ENCODE measurements at regions of chr17 and their contacts with region 1.

Region 1: GRCh38 chr17:29931231-29931932 is 1.4 kb upstream of the SSH2 start:
- DNase-seq: peak; percentile 58 to 85 (median 67)
- H3K4me3 ChIP-seq: peak overlapping the region in 1 of 4 donors; percentile 93
- H3K27ac ChIP-seq: peak overlapping the region in 1 of 5 donors; percentile 83
- H3K4me1 ChIP-seq: peaks cover 20 to 39% of the 10 kb centered on the region in 2 donors
- H3K27me3 ChIP-seq: no peaks in the 10 kb centered on the region
- CTCF ChIP-seq: peak; percentile 81 to 91 (median 82)
- POLR2A ChIP-seq: no peak

Region 2: DNA sequence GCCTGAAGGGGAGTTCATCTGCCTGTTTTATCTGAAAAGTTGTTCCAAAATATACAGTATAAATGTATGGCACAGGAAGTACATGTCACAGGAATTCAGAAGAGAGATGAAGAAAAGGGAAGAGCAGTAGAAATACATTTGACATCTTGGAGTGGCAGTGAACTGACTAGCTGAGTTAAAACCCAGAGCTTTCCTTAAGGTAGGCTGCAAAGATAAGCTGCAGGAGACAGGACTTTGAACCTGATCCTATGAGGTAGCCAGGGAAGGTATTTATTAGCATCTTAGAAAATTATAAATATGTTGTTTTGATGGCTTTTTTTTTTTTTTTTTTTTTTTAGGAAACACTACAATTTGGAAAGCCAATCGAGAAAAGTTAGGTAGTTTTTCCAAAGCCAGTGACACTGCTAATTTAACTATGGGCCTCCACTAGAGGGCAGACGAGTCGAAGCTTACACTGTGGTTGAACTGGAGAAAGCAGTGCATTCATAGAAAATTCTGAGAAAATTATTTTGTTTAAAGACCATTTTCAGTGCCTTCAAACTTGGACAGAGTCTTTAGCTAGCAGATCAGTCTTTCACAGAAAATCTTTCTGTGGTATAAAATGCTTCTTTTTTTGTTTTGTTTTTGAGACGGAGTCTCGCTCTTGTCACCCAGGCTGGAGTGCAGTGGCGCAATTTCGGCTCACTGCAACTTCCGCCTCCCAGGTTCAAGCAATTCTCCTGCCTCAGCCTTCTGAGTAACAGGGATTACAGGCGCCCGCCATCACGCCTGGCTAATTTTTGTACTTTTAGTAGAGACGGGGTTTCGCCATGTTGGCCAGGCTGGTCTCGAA is 123.6 kb before region 1 on chr17:
- intact Hi-C with region 1: loop called (anchors 5 kb)
- DNase-seq: peak; percentile 57 to 85 (median 75)
- H3K4me3 ChIP-seq: no peak overlapping the region
- H3K27ac ChIP-seq: no peak overlapping the region
- H3K4me1 ChIP-seq: no peaks in the 10 kb centered on the region
- H3K27me3 ChIP-seq: no peaks in the 10 kb centered on the region
- CTCF ChIP-seq: peak; percentile 34 to 87 (median 82)
- POLR2A ChIP-seq: no peak

Region 3: GRCh38 chr17:30021708-30022317 is 90.4 kb after region 1 on chr17:
- intact Hi-C with region 1: loop called in 1 of 2 experiments (anchors 10 kb)
- DNase-seq: peak; percentile 20 to 64 (median 34)
- H3K4me3 ChIP-seq: peak overlapping the region in 1 of 4 donors; percentile 20
- H3K27ac ChIP-seq: no peak overlapping the region
- H3K4me1 ChIP-seq: no peaks in the 10 kb centered on the region
- H3K27me3 ChIP-seq: peaks cover 8% of the 10 kb centered on the region
- CTCF ChIP-seq: peak; percentile 67 to 83 (median 76)
- POLR2A ChIP-seq: no peak